ENCODE measurements at regions of chr2 and their contacts with region 1.

Region 1: DNA sequence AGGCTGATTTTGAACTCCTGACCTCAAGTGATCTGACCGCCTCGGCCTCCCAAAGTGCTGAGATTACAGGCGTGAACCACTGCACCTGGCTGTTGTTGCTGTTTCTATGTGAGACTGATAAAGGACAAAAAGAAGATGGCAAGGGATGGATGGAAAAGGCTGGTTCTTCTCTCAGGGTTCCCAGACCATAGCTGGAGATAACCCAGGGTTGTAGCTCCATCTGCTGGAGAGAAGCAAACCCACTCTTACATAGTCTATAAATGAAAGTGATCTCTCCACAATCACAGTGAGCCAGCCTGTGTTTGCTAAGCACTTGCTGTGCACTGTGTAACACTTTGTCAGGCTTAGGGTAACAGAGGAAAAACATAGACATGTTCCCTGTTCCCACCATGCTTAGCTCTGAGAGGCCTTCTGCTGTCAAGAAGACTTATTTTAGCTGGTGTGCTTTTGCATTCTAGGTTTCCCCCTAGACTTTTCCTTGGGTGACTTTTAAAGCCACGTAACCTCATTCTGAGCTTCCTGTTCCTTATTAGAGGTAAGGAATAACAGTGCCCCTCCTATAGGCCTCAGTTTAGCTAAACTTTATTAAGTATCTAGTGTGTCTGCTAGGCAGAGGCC is 49.7 kb downstream of the LIMS1 start:
- H3K4me3 Mint-ChIP-seq: no peak overlapping the region
- H3K27ac Mint-ChIP-seq: peak overlapping the region; percentile 68
- H3K4me1 Mint-ChIP-seq: peaks cover 60% of the 10 kb centered on the region
- H3K27me3 Mint-ChIP-seq: no peaks in the 10 kb centered on the region

Region 2: GRCh38 chr2:107936433-107937359 is 647.3 kb before region 1 on chr2:
- intact Hi-C with region 1: loop called (anchors 10 kb)
- H3K4me3 Mint-ChIP-seq: no peak overlapping the region
- H3K27ac Mint-ChIP-seq: no peak overlapping the region
- H3K4me1 Mint-ChIP-seq: no peaks in the 10 kb centered on the region
- H3K27me3 Mint-ChIP-seq: no peaks in the 10 kb centered on the region

Region 3: GRCh38 chr2:108212671-108213070 is 371.3 kb before region 1 on chr2:
- intact Hi-C with region 1: loop called (anchors 5 kb)
- H3K4me3 Mint-ChIP-seq: no peak overlapping the region
- H3K27ac Mint-ChIP-seq: no peak overlapping the region
- H3K4me1 Mint-ChIP-seq: peaks cover 16% of the 10 kb centered on the region
- H3K27me3 Mint-ChIP-seq: no peaks in the 10 kb centered on the region

Region 4: GRCh38 chr2:108351889-108352288 is 232.1 kb before region 1 on chr2:
- intact Hi-C with region 1: loop called (anchors 1 kb)
- H3K4me3 Mint-ChIP-seq: no peak overlapping the region
- H3K27ac Mint-ChIP-seq: no peak overlapping the region
- H3K4me1 Mint-ChIP-seq: peaks cover 5% of the 10 kb centered on the region
- H3K27me3 Mint-ChIP-seq: no peaks in the 10 kb centered on the region

Region 5: GRCh38 chr2:108448678-108449493 is 135.1 kb before region 1 on chr2 and contains the start of gene GCC2:
- intact Hi-C with region 1: loop called (anchors 1 kb)
- H3K4me3 Mint-ChIP-seq: peak within 1 kb of the TSS; percentile 89
- H3K27ac Mint-ChIP-seq: peak within 1 kb of the TSS; percentile 88
- H3K4me1 Mint-ChIP-seq: peaks cover 24% of the 10 kb centered on the region
- H3K27me3 Mint-ChIP-seq: no peaks in the 10 kb centered on the region

Region 6: DNA sequence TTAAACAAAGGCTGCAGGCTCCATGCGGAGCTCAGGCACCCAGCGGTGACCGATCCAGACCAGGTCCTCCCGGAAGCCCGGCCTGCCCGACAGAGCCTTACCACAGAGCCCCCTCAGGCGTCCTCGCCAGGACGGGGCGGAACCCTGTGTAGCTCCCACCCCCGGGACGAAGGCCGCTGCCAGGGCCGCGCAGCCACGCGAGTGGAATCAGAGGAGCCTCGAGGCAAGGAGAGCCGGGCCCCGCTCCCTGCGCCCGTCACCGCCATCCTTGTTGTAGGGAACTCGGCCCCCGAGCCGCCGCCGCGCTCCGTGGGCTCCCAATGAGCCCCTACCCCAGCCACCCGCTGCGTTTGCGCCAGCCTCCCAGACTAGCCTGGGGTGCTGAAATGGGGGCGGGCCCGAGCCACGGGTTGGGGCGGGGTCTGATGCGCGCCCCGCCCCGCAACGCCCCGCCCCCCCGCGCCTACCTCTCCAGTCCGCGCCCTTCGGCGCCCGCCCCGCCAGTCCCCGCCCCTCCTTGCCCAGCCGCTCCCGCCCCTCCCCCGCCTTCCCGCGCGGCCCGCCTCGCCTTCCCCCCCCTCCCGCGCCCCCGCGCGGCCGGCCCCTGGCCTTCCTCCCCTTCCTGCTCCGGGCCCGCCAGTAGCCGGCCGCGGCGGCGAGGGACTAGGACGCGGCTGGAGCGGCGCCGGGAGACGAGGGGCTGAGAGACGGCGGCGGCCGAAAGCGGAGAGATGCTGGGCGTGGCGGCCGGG is 50.0 kb before region 1 on chr2 and contains the start of gene LIMS1:
- intact Hi-C with region 1: loop called (anchors 2 kb)
- H3K4me3 Mint-ChIP-seq: peak within 1 kb of the TSS; percentile 87
- H3K27ac Mint-ChIP-seq: peak within 1 kb of the TSS; percentile 92
- H3K4me1 Mint-ChIP-seq: peaks cover 45% of the 10 kb centered on the region
- H3K27me3 Mint-ChIP-seq: no peaks in the 10 kb centered on the region

Region 7: DNA sequence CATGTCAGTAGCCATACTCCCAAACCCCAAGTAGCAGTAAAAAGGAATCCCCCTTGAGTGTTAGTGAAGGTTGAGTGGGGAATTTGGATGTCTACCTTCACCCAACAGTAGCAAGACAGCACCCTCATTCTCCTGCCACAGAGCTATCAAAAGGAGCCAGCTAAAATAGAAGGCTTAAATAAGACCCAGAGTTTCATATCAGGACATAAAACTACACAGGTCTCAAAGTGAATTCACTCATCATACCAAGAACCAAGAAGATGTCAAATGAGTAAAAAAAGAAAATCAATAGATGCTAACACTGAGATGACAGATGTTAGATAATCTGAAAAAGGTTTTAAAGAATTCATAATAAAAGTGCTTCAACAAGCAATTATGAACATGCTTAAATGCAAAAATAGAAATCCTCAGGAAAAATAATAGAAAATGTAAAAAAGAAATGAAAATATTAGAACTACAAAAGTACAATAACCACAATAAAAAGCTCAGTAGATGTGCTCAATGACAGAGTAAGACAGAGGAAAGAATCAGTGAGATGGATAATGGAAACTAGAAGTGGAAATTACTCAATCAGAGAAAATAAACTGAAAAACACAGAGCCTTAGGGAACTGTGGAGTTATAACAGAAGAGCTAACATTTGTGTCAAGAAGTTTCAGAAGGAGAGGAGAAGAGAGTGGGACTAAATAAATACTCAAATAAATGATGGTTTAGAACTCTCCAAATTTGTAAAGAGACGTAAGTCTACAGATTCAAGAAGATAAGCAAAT is 314.5 kb after region 1 on chr2:
- intact Hi-C with region 1: no loop called
- H3K4me3 Mint-ChIP-seq: no peak overlapping the region
- H3K27ac Mint-ChIP-seq: no peak overlapping the region
- H3K4me1 Mint-ChIP-seq: no peaks in the 10 kb centered on the region
- H3K27me3 Mint-ChIP-seq: no peaks in the 10 kb centered on the region